ENCODE measurements at regions of chr12 and their contacts with region 1.

Region 1: DNA sequence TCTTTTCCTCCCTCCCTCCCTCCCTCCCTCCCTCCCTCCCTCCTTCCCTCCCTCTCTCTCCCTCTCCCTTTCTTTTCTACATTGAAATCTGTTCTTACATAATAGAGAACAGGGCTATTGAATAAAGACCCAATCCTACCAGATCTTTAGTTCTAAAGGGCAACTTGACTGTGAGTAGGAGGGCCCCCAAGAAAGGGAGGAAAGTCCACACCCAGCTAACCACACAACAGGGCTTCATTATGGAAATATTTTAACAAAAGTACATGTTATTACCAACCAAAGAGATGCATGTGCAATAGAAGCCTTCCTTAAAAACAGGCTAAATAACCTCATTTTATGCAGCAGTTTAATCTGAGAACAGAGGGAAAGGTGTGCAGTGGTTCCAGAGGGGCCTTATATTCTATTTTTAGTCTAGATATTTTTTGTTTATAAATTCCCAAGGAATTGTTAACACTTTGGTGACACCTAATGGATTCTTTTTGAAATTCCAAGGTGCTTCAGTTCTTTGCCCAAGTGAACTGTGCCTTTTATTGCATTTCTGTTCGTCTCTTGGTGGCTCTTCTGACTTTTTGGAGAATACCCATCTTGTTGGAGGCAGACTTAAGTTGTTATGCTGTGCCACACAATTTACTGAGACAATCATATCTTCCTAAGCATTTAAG is 63.0 kb downstream of the GNS start:
- DNase-seq: peak in 2 of 14 experiments; percentile 42 to 56
- ATAC-seq: no peak
- H3K4me3 ChIP-seq: no peak overlapping the region
- H3K4me3 Mint-ChIP-seq: no peak overlapping the region
- H3K27ac ChIP-seq: peak overlapping the region in 1 of 2 donors; percentile 29
- H3K27ac Mint-ChIP-seq: peak overlapping the region; percentile 85
- H3K4me1 ChIP-seq: peaks cover 70% of the 10 kb centered on the region
- H3K4me1 Mint-ChIP-seq: peaks cover 77% of the 10 kb centered on the region
- H3K27me3 ChIP-seq: no peaks in the 10 kb centered on the region
- H3K27me3 Mint-ChIP-seq: no peaks in the 10 kb centered on the region
- CTCF ChIP-seq: peak; percentile 24

Region 2: GRCh38 chr12:64403707-64404469 is 292.3 kb before region 1 on chr12 and contains the start of gene XPOT:
- CTCF ChIA-PET with region 1: no interaction called
- POLR2A ChIA-PET with region 1: no interaction called
- intact Hi-C with region 1: loop called in 1 of 2 experiments (anchors 10 kb)
- DNase-seq: peak; percentile 82 to 99 (median 91)
- ATAC-seq: peak; percentile 94
- H3K4me3 ChIP-seq: peak within 1 kb of the TSS; percentile 96
- H3K4me3 Mint-ChIP-seq: peak within 1 kb of the TSS; percentile 98
- H3K27ac ChIP-seq: peak within 1 kb of the TSS; percentile 78 to 83
- H3K27ac Mint-ChIP-seq: peak within 1 kb of the TSS; percentile 94
- H3K4me1 ChIP-seq: peaks cover 31% of the 10 kb centered on the region
- H3K4me1 Mint-ChIP-seq: peaks cover 36% of the 10 kb centered on the region
- H3K27me3 ChIP-seq: no peaks in the 10 kb centered on the region
- H3K27me3 Mint-ChIP-seq: no peaks in the 10 kb centered on the region
- CTCF ChIP-seq: no peak
- total RNA-seq, gene XPOT: 39.6 to 40.0 TPM

Region 3: DNA sequence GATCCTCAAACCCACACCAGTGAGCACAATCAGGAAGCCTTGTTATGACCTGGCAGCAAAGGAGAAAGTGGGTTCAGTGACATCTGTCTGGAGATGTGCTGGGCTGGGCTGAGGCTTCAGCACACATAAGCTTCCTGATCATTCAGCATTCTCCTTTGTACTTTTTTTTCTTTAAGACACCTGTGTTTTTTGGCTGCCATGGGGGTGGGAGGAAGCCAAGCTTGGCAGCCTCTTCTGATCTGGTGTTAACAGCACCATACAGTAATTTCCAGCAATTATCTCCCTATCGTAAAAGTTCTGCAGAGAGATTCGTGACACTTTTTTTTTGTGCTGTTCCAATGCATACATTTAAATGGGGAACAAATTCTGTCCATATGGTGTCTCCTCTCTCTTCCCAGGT is 124.8 kb before region 1 on chr12:
- CTCF ChIA-PET with region 1: interaction called, 3 read pairs
- POLR2A ChIA-PET with region 1: interaction called, 13 read pairs
- intact Hi-C with region 1: no loop called
- DNase-seq: peak in 7 of 14 experiments; percentile 4 to 46 (median 20)
- ATAC-seq: peak; percentile 88
- H3K4me3 ChIP-seq: no peak overlapping the region
- H3K4me3 Mint-ChIP-seq: no peak overlapping the region
- H3K27ac ChIP-seq: no peak overlapping the region
- H3K27ac Mint-ChIP-seq: peak overlapping the region; percentile 45
- H3K4me1 ChIP-seq: peaks cover 31% of the 10 kb centered on the region
- H3K4me1 Mint-ChIP-seq: peaks cover 58% of the 10 kb centered on the region
- H3K27me3 ChIP-seq: no peaks in the 10 kb centered on the region
- H3K27me3 Mint-ChIP-seq: no peaks in the 10 kb centered on the region
- CTCF ChIP-seq: no peak

Region 4: GRCh38 chr12:64650762-64651161 is 45.4 kb before region 1 on chr12:
- CTCF ChIA-PET with region 1: interaction called, 7 read pairs
- POLR2A ChIA-PET with region 1: interaction called, 808 read pairs
- intact Hi-C with region 1: loop called (anchors 5 kb)
- DNase-seq: no peak
- ATAC-seq: no peak
- H3K4me3 ChIP-seq: no peak overlapping the region
- H3K4me3 Mint-ChIP-seq: peak overlapping the region; percentile 48
- H3K27ac ChIP-seq: no peak overlapping the region
- H3K27ac Mint-ChIP-seq: peak overlapping the region; percentile 48
- H3K4me1 ChIP-seq: peaks cover 81% of the 10 kb centered on the region
- H3K4me1 Mint-ChIP-seq: peaks cover 79% of the 10 kb centered on the region
- H3K27me3 ChIP-seq: no peaks in the 10 kb centered on the region
- H3K27me3 Mint-ChIP-seq: no peaks in the 10 kb centered on the region
- CTCF ChIP-seq: no peak

Region 5: DNA sequence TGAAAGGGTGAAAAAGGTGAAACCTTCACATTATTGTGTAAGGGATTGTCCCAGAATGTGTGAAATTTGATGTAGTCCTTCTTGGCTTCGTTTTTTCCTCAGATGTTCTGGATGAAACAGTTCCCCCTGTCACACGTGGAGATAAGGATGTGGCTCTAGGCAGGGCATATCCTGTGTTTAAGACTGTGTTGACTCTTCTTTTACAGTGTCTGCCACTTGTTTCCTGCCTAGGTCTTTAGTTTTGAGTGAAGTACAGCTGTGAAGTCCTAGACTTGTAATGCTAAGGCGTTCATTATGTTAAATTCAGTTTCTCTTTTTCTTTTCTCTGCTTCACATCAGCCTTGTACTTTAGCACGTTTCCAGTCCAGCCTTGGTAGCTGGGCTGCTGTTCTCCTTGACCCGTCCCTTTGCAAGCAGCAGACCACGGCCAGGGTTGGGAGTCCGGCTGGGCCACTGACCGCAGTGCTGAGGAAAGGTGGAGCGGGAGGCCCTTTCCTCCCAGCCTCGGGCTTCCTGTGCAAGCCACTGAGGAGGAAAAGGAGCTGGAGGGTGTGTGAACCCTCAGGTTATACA is 26.9 kb before region 1 on chr12:
- CTCF ChIA-PET with region 1: interaction called, 13 read pairs
- POLR2A ChIA-PET with region 1: interaction called, 808 read pairs
- intact Hi-C with region 1: loop called in 1 of 2 experiments (anchors 5 kb)
- DNase-seq: peak in 13 of 14 experiments; percentile 23 to 93 (median 48)
- ATAC-seq: peak; percentile 81
- H3K4me3 ChIP-seq: peak overlapping the region; percentile 59
- H3K4me3 Mint-ChIP-seq: peak overlapping the region; percentile 91
- H3K27ac ChIP-seq: peak overlapping the region; percentile 82 to 91
- H3K27ac Mint-ChIP-seq: peak overlapping the region; percentile 98
- H3K4me1 ChIP-seq: peaks cover 87% of the 10 kb centered on the region
- H3K4me1 Mint-ChIP-seq: peaks cover 94% of the 10 kb centered on the region
- H3K27me3 ChIP-seq: no peaks in the 10 kb centered on the region
- H3K27me3 Mint-ChIP-seq: no peaks in the 10 kb centered on the region
- CTCF ChIP-seq: no peak

Region 6: DNA sequence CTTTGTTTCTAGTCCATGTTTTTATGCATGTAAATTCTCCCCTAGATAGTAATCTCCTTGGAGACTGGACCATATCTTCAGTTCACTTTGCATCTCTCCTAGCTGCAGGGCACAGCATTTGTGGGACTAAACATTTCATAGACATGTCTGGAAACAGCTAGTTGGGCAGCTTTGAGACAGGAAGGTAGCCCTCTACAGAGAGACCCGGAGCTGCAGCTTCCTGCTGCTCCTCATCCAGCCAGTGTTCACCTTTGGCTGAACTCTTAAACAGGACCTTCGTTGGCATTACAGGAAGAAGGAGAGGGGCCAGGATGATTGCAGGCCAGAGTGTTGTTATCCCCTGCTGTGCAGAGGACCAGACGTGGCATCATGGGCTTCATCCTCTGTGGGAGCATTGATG is 10.1 kb after region 1 on chr12:
- CTCF ChIA-PET with region 1: interaction called, 12 read pairs
- POLR2A ChIA-PET with region 1: interaction called, 3 read pairs
- intact Hi-C with region 1: no loop called
- DNase-seq: no peak
- ATAC-seq: no peak
- H3K4me3 ChIP-seq: no peak overlapping the region
- H3K4me3 Mint-ChIP-seq: no peak overlapping the region
- H3K27ac ChIP-seq: no peak overlapping the region
- H3K27ac Mint-ChIP-seq: peak overlapping the region; percentile 44
- H3K4me1 ChIP-seq: peaks cover 10% of the 10 kb centered on the region
- H3K4me1 Mint-ChIP-seq: peaks cover 30% of the 10 kb centered on the region
- H3K27me3 ChIP-seq: no peaks in the 10 kb centered on the region
- H3K27me3 Mint-ChIP-seq: no peaks in the 10 kb centered on the region
- CTCF ChIP-seq: no peak

Region 7: GRCh38 chr12:65121049-65121955 is 425.1 kb after region 1 on chr12 and contains the start of gene WIF1:
- CTCF ChIA-PET with region 1: no interaction called
- POLR2A ChIA-PET with region 1: no interaction called
- intact Hi-C with region 1: no loop called
- DNase-seq: peak in 4 of 14 experiments; percentile 3 to 33 (median 8)
- ATAC-seq: peak; percentile 37
- H3K4me3 ChIP-seq: peak within 1 kb of the TSS; percentile 11
- H3K4me3 Mint-ChIP-seq: peak within 1 kb of the TSS; percentile 39
- H3K27ac ChIP-seq: no peak within 1 kb of the TSS
- H3K27ac Mint-ChIP-seq: no peak within 1 kb of the TSS
- H3K4me1 ChIP-seq: peaks cover 12% of the 10 kb centered on the region
- H3K4me1 Mint-ChIP-seq: no peaks in the 10 kb centered on the region
- H3K27me3 ChIP-seq: peaks cover 26 to 67% of the 10 kb centered on the region in 2 experiments
- H3K27me3 Mint-ChIP-seq: peaks cover 56% of the 10 kb centered on the region
- CTCF ChIP-seq: no peak
- total RNA-seq, gene WIF1: not detected